IMR-90 (cell line): ENCODE measurements at regions of chr20 and their contacts with region 1.

Region 1: DNA sequence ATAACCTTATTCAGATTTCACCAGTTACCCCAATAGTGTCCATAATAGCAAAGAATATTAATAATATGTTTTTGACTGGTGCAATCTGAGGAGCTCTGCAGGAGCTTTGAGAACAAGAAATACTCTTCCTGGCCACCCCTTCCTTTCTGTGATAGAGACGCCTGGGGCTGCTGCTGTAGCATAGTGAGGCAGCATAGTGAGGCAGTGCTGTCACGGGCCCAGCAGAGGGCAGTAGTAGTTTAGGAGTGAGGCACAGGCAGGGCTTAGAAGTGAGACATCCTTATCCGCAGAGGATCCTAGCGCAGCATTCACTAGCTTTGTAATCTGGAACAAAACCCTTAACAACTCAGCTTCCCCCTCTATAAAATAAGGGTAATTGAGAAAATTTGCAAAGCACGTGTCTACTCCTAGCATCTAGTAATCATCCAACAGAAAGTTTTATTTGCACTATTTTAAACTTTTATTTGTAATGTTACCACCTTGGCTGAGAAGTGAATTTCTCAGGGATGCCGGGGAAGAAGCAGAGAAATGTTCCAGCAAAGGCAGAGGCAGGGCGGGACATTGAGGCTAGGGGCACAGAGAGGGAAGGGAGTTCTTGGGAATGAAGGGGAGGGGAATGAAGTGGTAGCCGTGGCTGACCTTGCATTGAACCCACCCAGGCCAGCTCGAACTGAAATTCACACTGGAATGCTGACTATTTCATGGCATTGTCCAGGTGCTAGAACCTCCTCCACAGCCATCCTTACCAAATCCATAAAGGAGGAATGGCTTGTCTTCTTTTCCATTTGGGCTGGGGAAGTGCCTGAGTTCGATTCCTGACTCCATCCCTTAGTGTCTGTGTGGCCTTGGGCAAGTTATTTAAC is 78.8 kb downstream of the CDS2 start:
- DNase-seq: peak; percentile 76
- ATAC-seq: peak; percentile 100
- H3K4me3 ChIP-seq: no peak overlapping the region
- H3K27ac ChIP-seq: no peak overlapping the region
- H3K4me1 ChIP-seq: no peaks in the 10 kb centered on the region
- H3K27me3 ChIP-seq: no peaks in the 10 kb centered on the region
- CTCF ChIP-seq: peak; percentile 89
- POLR2A ChIP-seq: no peak
- RAD21 ChIP-seq: peak; percentile 86

Region 2: DNA sequence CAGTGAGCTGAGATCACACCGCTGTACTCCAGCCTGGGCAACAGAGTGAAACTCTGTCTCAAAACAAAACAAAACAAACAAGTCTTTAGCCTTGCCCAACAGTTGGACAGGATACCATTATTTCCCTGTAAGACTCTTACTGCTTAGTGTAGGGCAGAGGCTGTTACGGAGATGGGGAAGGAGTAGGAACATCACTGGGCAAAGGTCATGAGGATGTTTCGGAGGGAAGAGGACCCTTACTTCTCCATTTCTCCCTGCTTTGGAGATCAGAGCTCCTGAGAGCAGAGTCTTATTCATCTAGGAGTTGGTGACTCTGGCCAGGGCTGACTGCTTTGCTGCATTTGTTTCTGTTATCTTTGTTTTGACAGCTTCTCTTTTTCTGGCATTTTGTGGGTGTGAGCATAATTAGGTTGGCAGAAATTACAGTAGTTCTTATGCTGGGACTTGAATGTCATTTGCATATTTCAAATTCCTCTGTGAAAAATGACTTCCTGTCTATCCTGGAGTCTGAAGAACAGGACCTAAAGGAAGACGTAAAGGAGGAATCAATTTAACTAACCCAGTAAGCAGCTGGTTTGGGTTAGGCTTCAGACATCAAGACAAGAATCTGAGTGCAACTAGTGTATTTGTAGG is 10.2 kb after region 1 on chr20:
- CTCF ChIA-PET with region 1: interaction called, 13 read pairs
- POLR2A ChIA-PET with region 1: no interaction called
- dilution Hi-C with region 1: no loop called
- in situ Hi-C with region 1: no loop called
- intact Hi-C with region 1: no loop called
- DNase-seq: peak; percentile 33
- ATAC-seq: peak; percentile 68
- H3K4me3 ChIP-seq: no peak overlapping the region
- H3K27ac ChIP-seq: no peak overlapping the region
- H3K4me1 ChIP-seq: peaks cover 7% of the 10 kb centered on the region
- H3K27me3 ChIP-seq: no peaks in the 10 kb centered on the region
- CTCF ChIP-seq: no peak
- POLR2A ChIP-seq: no peak
- RAD21 ChIP-seq: no peak

Region 3: GRCh38 chr20:5222919-5223634 is 17.5 kb after region 1 on chr20:
- CTCF ChIA-PET with region 1: interaction called, 15 read pairs
- POLR2A ChIA-PET with region 1: no interaction called
- dilution Hi-C with region 1: no loop called
- in situ Hi-C with region 1: no loop called
- intact Hi-C with region 1: loop called (anchors 1 kb)
- DNase-seq: peak; percentile 69
- ATAC-seq: peak; percentile 92
- H3K4me3 ChIP-seq: no peak overlapping the region
- H3K27ac ChIP-seq: no peak overlapping the region
- H3K4me1 ChIP-seq: no peaks in the 10 kb centered on the region
- H3K27me3 ChIP-seq: no peaks in the 10 kb centered on the region; the same call in 1 of the 2 replicates
- CTCF ChIP-seq: peak; percentile 94
- POLR2A ChIP-seq: no peak
- RAD21 ChIP-seq: peak; percentile 81

Region 4: DNA sequence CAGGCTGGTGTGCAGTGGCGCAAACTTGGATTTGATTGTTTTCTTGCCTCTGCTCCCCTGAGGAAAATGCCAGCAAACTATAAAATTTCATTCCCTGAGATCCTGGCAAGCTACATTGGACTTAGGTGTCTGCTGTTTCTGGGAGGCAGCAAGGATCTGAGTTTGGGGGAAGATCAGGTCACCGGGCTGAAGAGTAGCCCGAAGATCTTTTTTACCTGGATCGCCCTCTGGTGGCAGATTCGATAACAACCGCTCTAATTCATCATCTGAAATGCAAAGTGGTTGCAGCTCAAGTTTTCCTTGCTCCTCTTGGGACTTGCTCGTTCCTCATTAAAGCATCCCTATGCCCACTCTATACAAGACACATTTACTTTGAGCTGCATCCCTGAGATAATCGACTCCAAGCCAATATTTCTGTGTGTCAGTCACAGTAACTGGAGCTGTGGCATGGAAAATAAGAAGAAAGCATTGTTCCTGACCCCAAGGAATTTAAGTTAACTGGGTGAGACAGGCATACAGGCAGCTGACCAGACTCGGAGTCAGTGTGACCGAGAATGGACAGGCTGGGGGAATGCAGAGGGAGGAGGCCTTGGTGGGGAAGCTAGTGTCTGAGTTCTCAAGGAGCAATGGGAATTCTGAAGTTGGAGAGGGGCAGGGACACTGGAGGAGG is 243.0 kb after region 1 on chr20:
- CTCF ChIA-PET with region 1: interaction called, 8 read pairs
- POLR2A ChIA-PET with region 1: no interaction called
- dilution Hi-C with region 1: no loop called
- in situ Hi-C with region 1: loop called (anchors 5 kb)
- intact Hi-C with region 1: loop called (anchors 1 kb)
- DNase-seq: peak; percentile 28
- ATAC-seq: peak; percentile 72
- H3K4me3 ChIP-seq: no peak overlapping the region
- H3K27ac ChIP-seq: no peak overlapping the region
- H3K4me1 ChIP-seq: no peaks in the 10 kb centered on the region
- H3K27me3 ChIP-seq: peaks cover 5% of the 10 kb centered on the region; the same call in 1 of the 2 replicates
- CTCF ChIP-seq: peak; percentile 59
- POLR2A ChIP-seq: no peak
- RAD21 ChIP-seq: peak; percentile 49